HCT116 (cell line): ENCODE measurements at regions of chr16 and their contacts with region 1.

Region 1: DNA sequence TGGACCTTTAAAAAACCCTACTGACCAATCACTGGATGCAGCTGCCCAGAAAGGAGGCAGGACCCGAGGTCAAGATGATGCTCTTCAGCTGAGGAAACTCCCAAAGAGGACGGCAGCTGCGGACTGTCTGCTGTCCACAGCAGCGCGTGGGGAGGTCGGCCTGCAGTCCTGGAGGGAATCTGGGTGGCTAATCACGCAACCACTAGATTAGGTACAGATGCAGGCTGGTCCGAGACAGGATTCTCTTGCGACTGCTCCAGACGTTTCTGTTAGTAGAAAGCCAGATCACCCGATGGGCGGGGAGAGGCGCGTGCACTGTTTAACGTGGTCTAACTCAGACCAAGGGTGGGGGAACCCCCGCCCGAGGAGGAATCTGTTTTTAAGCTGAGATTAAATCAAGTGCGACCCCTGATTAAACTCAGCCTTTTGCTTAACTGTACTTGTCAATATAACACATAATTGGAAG is 8.8 kb downstream of the CTRB2 start:
- DNase-seq: no peak
- ATAC-seq: no peak
- H3K4me3 ChIP-seq: no peak overlapping the region
- H3K27ac ChIP-seq: no peak overlapping the region
- H3K4me1 ChIP-seq: peaks cover 0 to 4% of the 10 kb centered on the region in 2 experiments; a peak in 1 of 4 replicates
- H3K27me3 ChIP-seq: no peaks in the 10 kb centered on the region; the same call in 1 of the 2 replicates
- CTCF ChIP-seq: no peak
- POLR2A ChIP-seq: no peak
- RAD21 ChIP-seq: no peak

Region 2: GRCh38 chr16:75219838-75220237 is 21.7 kb after region 1 on chr16:
- CTCF ChIA-PET with region 1: interaction called, 5 read pairs
- POLR2A ChIA-PET with region 1: no interaction called
- RAD21 ChIA-PET with region 1: no interaction called
- intact Hi-C with region 1: loop called (anchors 1 kb)
- DNase-seq: no peak
- ATAC-seq: no peak
- H3K4me3 ChIP-seq: no peak overlapping the region
- H3K27ac ChIP-seq: no peak overlapping the region
- H3K4me1 ChIP-seq: no peaks in the 10 kb centered on the region
- H3K27me3 ChIP-seq: no peaks in the 10 kb centered on the region
- CTCF ChIP-seq: no peak
- POLR2A ChIP-seq: no peak
- RAD21 ChIP-seq: no peak

Region 3: DNA sequence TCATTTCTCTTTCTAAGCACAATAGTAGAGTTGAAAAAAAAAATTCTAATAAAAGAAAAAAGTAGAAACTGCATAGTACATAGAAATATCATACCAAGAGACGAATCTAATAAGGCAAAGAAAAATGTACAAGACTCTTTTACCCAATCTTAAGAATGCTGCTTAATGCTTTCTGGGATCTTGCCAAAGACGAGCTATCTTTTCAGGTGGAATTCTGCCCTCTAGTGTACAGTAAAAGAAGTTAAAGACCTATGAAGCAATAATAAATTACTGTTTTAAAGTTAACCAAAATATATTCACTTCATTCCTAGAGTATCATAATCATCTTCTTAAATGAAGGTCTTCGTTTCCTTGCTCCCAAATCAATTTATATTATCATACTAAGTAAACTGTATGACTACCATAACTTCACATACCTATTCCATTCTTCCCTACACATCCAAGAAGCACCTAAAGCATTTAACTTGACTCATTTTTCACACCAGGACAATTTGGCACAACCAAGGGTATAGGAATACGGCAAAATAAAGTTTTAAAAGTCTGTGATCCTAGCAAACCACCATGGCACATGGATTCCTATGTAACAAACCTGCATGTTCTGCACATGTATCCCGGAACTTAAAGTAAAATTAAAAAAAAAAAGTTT is 187.5 kb after region 1 on chr16:
- CTCF ChIA-PET with region 1: interaction called, 48 read pairs
- POLR2A ChIA-PET with region 1: interaction called, 4 read pairs
- RAD21 ChIA-PET with region 1: interaction called, 9 to 10 read pairs
- intact Hi-C with region 1: loop called (anchors 1 kb)
- DNase-seq: peak; percentile 66
- ATAC-seq: no peak; the same call in 1 of the 2 replicates
- H3K4me3 ChIP-seq: no peak overlapping the region
- H3K27ac ChIP-seq: no peak overlapping the region
- H3K4me1 ChIP-seq: peaks cover 3 to 4% of the 10 kb centered on the region in 2 experiments; a peak in 1 of 4 replicates
- H3K27me3 ChIP-seq: no peaks in the 10 kb centered on the region
- CTCF ChIP-seq: peak; percentile 30 to 91 (median 74); a peak in 5 of 6 replicates
- POLR2A ChIP-seq: no peak
- RAD21 ChIP-seq: peak; percentile 97

Region 4: DNA sequence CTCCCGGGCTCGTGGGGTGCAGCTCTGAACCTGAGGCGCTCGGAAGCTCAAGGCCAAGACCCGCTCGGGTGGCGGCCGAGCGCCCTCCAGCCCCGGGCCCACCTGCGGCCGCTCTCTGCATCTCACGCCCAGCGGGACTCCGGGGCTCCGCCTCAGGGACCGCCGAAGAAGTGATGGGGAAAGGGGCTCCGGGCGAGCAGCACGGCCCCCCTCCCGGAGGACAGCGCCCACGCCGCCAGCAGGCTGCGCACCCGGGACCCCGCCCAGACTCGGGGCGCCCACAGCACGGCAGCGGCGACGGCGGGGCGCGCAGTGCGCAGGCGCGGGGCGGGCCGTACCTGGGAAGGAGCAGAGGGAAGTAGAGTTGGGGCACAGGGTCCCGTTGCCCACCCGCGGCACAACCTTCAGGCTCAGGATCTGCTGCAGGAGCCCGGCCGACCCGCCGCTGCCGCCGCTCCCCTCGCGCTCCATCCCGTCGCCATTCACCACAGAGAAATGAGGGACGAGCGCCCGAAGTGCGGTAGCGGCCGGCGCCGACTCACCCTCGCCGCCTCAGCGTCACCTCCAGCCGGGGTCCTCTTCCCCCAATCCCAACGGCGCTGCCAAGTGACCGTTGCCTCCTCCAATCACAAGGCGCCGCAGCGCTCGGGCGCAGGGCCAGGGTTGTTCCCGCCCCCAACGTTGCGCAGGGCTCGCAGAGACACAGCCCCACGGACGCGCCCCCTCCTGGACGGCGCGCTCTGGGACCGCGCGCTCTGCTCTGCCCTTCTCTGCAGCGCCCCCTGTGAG is 266.2 kb after region 1 on chr16 and contains the start of gene TMEM170A:
- CTCF ChIA-PET with region 1: interaction called, 21 read pairs
- POLR2A ChIA-PET with region 1: interaction called, 3 read pairs
- RAD21 ChIA-PET with region 1: interaction called, 5 to 6 read pairs
- intact Hi-C with region 1: loop called (anchors 1 kb)
- DNase-seq: peak; percentile 96
- ATAC-seq: peak; percentile 91
- H3K4me3 ChIP-seq: peak within 1 kb of the TSS; percentile 78 to 92
- H3K27ac ChIP-seq: peak within 1 kb of the TSS; percentile 94
- H3K4me1 ChIP-seq: peaks cover 3 to 26% of the 10 kb centered on the region in 2 experiments; a peak in 3 of 4 replicates
- H3K27me3 ChIP-seq: no peaks in the 10 kb centered on the region
- CTCF ChIP-seq: peak; percentile 100
- POLR2A ChIP-seq: peak; percentile 83
- RAD21 ChIP-seq: peak; percentile 81
- total RNA-seq, gene TMEM170A: 34.5 TPM

Region 5: DNA sequence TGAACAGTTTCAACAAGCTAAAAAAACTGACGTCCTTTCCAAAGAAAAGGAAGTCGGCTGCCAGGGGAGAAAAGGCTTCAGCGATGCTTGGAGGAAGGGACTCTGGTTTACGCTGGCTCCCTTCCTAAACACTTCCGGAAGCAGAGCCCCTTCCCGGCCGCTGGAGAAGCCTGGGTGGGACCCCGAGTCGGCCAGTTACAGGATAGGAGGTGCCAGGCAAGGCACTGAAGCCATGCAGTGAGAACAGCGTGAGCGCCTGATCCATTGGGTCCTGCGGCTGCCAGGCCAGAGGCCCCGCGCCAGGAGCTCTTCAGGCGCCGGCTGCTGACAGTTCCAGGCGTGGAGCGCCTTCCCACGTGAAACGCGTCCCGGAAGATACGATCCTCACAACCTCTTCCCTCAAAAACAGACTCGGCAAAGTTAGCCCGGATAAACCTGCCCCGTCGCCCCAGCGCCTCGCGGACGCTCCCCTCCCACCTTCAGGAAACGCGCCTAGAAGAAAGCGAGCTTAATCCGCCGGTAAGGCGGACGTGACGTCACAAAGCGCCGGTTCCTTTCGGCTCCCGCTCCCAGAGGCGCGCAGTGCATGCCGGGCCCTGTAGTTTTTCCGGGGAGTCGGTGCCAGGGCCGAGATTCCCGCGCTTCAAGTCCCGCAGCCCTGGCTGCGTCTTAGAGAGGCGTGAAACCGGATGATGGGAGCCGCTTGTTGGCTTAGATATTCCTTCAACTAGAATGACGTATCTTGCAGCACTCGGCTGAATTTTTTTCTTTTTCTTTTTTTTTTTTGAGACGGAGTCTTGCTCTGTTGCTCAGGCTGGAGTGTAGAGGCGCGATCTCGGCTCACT is 424.8 kb after region 1 on chr16 and contains the start of gene ADAT1:
- CTCF ChIA-PET with region 1: interaction called, 5 read pairs
- POLR2A ChIA-PET with region 1: no interaction called
- RAD21 ChIA-PET with region 1: interaction called in 1 of 2 experiments, 3 read pairs
- intact Hi-C with region 1: loop called (anchors 5 kb)
- DNase-seq: peak; percentile 96
- ATAC-seq: peak; percentile 95
- H3K4me3 ChIP-seq: peak within 1 kb of the TSS; percentile 75 to 79
- H3K27ac ChIP-seq: peak within 1 kb of the TSS; percentile 86
- H3K4me1 ChIP-seq: peaks cover 8 to 19% of the 10 kb centered on the region in 2 experiments
- H3K27me3 ChIP-seq: no peaks in the 10 kb centered on the region
- CTCF ChIP-seq: no peak
- POLR2A ChIP-seq: peak; percentile 78
- RAD21 ChIP-seq: no peak
- total RNA-seq, gene ADAT1: 44.2 TPM

Region 6: GRCh38 chr16:77171745-77172635 is 1973.8 kb after region 1 on chr16:
- CTCF ChIA-PET with region 1: interaction called, 10 read pairs
- POLR2A ChIA-PET with region 1: no interaction called
- RAD21 ChIA-PET with region 1: no interaction called
- intact Hi-C with region 1: no loop called
- DNase-seq: peak; percentile 49
- ATAC-seq: peak; percentile 87
- H3K4me3 ChIP-seq: no peak overlapping the region
- H3K27ac ChIP-seq: no peak overlapping the region
- H3K4me1 ChIP-seq: no peaks in the 10 kb centered on the region
- H3K27me3 ChIP-seq: peaks cover 11% of the 10 kb centered on the region; the same call in 1 of the 2 replicates
- CTCF ChIP-seq: peak; percentile 51 to 76 (median 62)
- POLR2A ChIP-seq: no peak
- RAD21 ChIP-seq: peak; percentile 78